Lower leg skin (tissue), 4 donors: ENCODE measurements at regions of chr17 and their contacts with region 1.

Region 1: GRCh38 chr17:9517396-9517795 is 58.2 kb downstream of the STX8 start:
- DNase-seq: no peak
- H3K4me3 ChIP-seq: no peak overlapping the region
- CTCF ChIP-seq: no peak
- POLR2A ChIP-seq: no peak

Region 2: GRCh38 chr17:8997994-8998628 is 519.3 kb before region 1 on chr17:
- intact Hi-C with region 1: loop called (anchors 5 kb)
- DNase-seq: peak in 1 of 2 donors; percentile 89
- H3K4me3 ChIP-seq: no peak overlapping the region
- CTCF ChIP-seq: peak in 1 of 3 donors; percentile 25
- POLR2A ChIP-seq: no peak